ENCODE measurements at regions of chr15 and their contacts with region 1.

Region 1: DNA sequence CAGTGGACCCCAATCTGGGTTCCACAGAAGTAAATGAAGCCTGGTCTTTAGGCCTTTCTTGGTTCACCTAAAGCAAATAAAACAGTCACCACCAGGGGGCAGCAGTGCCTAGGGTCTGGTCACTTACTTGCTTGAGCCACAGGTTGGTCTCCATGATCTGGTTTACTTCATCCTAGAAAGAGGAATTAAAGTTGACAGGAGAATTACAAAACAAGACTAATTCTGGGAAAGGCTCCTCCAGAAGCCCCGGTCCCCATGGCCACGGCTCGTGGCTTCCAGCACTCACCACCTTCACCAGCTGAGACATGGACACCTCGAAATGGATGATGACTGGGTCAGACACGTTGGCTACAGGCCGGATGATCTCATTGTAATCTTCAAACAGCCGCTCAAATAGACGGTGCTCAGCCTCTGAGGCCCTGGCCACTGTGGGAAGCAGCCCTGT is 2.3 kb downstream of the CHRNA3 start:
- DNase-seq: peak; percentile 86 to 91 (median 90)
- ATAC-seq: peak; percentile 83
- H3K4me3 ChIP-seq: no peak overlapping the region
- H3K27ac ChIP-seq: no peak overlapping the region
- H3K4me1 ChIP-seq: peaks cover 9% of the 10 kb centered on the region
- H3K27me3 ChIP-seq: peaks cover 0 to 8% of the 10 kb centered on the region in 2 donors
- CTCF ChIP-seq: peak; percentile 70 to 86 (median 79)
- POLR2A ChIP-seq: no peak

Region 2: GRCh38 chr15:78663703-78664102 is 45.2 kb after region 1 on chr15:
- intact Hi-C with region 1: no loop called
- DNase-seq: no peak
- ATAC-seq: no peak
- H3K4me3 ChIP-seq: no peak overlapping the region
- H3K27ac ChIP-seq: no peak overlapping the region
- H3K4me1 ChIP-seq: no peaks in the 10 kb centered on the region
- H3K27me3 ChIP-seq: no peaks in the 10 kb centered on the region
- CTCF ChIP-seq: no peak
- POLR2A ChIP-seq: no peak

Region 3: GRCh38 chr15:78709263-78709882 is 90.9 kb after region 1 on chr15:
- intact Hi-C with region 1: loop called (anchors 10 kb)
- DNase-seq: peak; percentile 68 to 74 (median 70)
- ATAC-seq: peak; percentile 93
- H3K4me3 ChIP-seq: no peak overlapping the region
- H3K27ac ChIP-seq: no peak overlapping the region
- H3K4me1 ChIP-seq: peaks cover 7% of the 10 kb centered on the region
- H3K27me3 ChIP-seq: no peaks in the 10 kb centered on the region
- CTCF ChIP-seq: peak; percentile 79 to 93 (median 88)
- POLR2A ChIP-seq: no peak

Region 4: DNA sequence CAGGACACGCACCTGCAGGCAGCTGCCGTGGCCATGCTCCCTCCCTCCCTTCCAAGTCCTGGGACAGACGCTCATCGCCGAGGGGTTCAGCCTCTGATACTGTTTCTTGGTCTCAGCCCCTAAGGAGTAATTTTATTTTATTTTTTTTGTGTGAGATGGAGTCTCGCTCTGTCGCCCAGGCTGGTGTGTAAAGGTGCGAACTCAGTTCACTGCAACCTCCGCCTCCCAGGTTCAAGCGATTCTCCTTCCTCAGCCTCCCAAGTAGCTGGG is 139.1 kb after region 1 on chr15:
- intact Hi-C with region 1: loop called (anchors 5 kb)
- DNase-seq: peak in 1 of 4 donors; percentile 1
- ATAC-seq: no peak
- H3K4me3 ChIP-seq: no peak overlapping the region
- H3K27ac ChIP-seq: no peak overlapping the region
- H3K4me1 ChIP-seq: peaks cover 17% of the 10 kb centered on the region
- H3K27me3 ChIP-seq: no peaks in the 10 kb centered on the region
- CTCF ChIP-seq: no peak
- POLR2A ChIP-seq: no peak

Measured in body of pancreas (tissue), 4 donors.